ENCODE measurements at regions of chr3 and their contacts with region 1.

Region 1: DNA sequence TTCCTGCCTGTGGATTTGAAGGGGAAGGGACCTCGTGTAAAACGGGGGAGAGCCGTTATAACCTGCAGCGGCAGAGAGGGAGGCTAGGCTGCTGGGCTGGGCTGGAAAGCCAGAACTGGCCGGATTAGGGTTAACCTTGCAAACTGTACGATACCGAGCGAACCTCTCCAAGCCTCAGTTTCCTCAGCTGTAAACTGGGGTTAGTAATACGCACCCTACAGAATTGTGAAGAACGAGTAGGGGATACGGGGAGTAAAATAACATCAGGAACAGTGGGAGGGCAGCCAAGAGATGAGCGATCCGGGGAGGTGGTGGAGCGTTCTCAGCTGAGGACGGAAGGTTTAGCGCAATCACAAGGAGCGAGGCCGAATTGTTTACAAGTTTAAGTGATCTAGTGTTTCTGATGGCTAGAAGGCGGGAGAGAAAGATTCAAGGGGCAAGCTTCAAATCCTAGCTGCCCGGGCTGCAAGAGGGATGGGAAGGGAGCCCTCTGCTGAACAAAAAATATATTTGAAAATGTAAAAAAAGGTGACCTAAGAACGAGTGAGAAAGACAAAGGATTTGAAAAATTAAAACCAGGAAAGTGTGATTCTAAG is 768 bp upstream of the SEMA5B start:
- DNase-seq: peak; percentile 79
- H3K4me3 Mint-ChIP-seq: peak overlapping the region; percentile 52
- H3K27ac Mint-ChIP-seq: no peak overlapping the region
- H3K4me1 Mint-ChIP-seq: peaks cover 9% of the 10 kb centered on the region
- H3K27me3 Mint-ChIP-seq: peaks cover 50% of the 10 kb centered on the region
- CTCF ChIP-seq: peak; percentile 66

Region 2: GRCh38 chr3:122392868-122393844 is 635.2 kb before region 1 on chr3:
- CTCF ChIA-PET with region 1: no interaction called
- POLR2A ChIA-PET with region 1: no interaction called
- intact Hi-C with region 1: loop called (anchors 1 kb)
- DNase-seq: peak; percentile 56
- H3K4me3 Mint-ChIP-seq: no peak overlapping the region
- H3K27ac Mint-ChIP-seq: peak overlapping the region; percentile 89
- H3K4me1 Mint-ChIP-seq: peaks cover 25% of the 10 kb centered on the region
- H3K27me3 Mint-ChIP-seq: no peaks in the 10 kb centered on the region
- CTCF ChIP-seq: peak; percentile 67

Region 3: GRCh38 chr3:122508135-122508914 is 520.0 kb before region 1 on chr3:
- CTCF ChIA-PET with region 1: no interaction called
- POLR2A ChIA-PET with region 1: no interaction called
- intact Hi-C with region 1: no loop called
- DNase-seq: no peak
- H3K4me3 Mint-ChIP-seq: no peak overlapping the region
- H3K27ac Mint-ChIP-seq: peak overlapping the region; percentile 67
- H3K4me1 Mint-ChIP-seq: peaks cover 42% of the 10 kb centered on the region
- H3K27me3 Mint-ChIP-seq: no peaks in the 10 kb centered on the region
- CTCF ChIP-seq: no peak

Region 4: GRCh38 chr3:122754929-122755328 is 273.4 kb before region 1 on chr3:
- CTCF ChIA-PET with region 1: interaction called, 12 read pairs
- POLR2A ChIA-PET with region 1: interaction called, 3 read pairs
- intact Hi-C with region 1: loop called (anchors 1 kb)
- DNase-seq: peak; percentile 74
- H3K4me3 Mint-ChIP-seq: no peak overlapping the region
- H3K27ac Mint-ChIP-seq: no peak overlapping the region
- H3K4me1 Mint-ChIP-seq: no peaks in the 10 kb centered on the region
- H3K27me3 Mint-ChIP-seq: no peaks in the 10 kb centered on the region
- CTCF ChIP-seq: peak; percentile 64

Region 5: GRCh38 chr3:122858373-122858772 is 170.0 kb before region 1 on chr3:
- CTCF ChIA-PET with region 1: interaction called, 44 read pairs
- POLR2A ChIA-PET with region 1: interaction called, 14 read pairs
- intact Hi-C with region 1: loop called (anchors 1 kb)
- DNase-seq: peak; percentile 37
- H3K4me3 Mint-ChIP-seq: no peak overlapping the region
- H3K27ac Mint-ChIP-seq: no peak overlapping the region
- H3K4me1 Mint-ChIP-seq: no peaks in the 10 kb centered on the region
- H3K27me3 Mint-ChIP-seq: no peaks in the 10 kb centered on the region
- CTCF ChIP-seq: peak; percentile 37

Region 6: DNA sequence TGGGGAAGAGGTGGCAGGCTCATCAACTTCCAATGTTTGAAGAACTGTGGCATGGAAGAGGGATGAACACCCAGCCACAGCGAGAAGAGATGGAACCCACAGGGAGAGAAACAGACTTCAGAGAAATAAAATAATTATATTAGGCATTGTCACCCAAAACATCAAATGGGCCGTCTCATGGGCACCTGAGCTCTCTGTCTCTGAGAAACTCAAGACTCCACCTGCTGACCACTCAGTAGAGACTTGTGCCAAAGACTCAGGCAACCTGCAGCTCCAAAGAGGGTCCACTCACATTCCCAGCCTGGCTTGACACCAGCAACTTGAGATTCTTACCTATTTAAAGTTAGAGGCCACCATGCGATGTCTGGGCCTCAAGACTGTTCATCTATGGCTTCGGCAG is 12.8 kb before region 1 on chr3:
- CTCF ChIA-PET with region 1: interaction called, 10 read pairs
- POLR2A ChIA-PET with region 1: no interaction called
- intact Hi-C with region 1: no loop called
- DNase-seq: peak; percentile 26
- H3K4me3 Mint-ChIP-seq: no peak overlapping the region
- H3K27ac Mint-ChIP-seq: no peak overlapping the region
- H3K4me1 Mint-ChIP-seq: no peaks in the 10 kb centered on the region
- H3K27me3 Mint-ChIP-seq: peaks cover 42% of the 10 kb centered on the region
- CTCF ChIP-seq: peak; percentile 7

Region 7: GRCh38 chr3:123169492-123169929 is 141.2 kb after region 1 on chr3:
- CTCF ChIA-PET with region 1: no interaction called
- POLR2A ChIA-PET with region 1: no interaction called
- intact Hi-C with region 1: no loop called
- DNase-seq: no peak
- H3K4me3 Mint-ChIP-seq: no peak overlapping the region
- H3K27ac Mint-ChIP-seq: no peak overlapping the region
- H3K4me1 Mint-ChIP-seq: no peaks in the 10 kb centered on the region
- H3K27me3 Mint-ChIP-seq: no peaks in the 10 kb centered on the region
- CTCF ChIP-seq: no peak

Measured in MCF 10A (cell line).